AG04450 (cell line): ENCODE measurements at regions of chr6 and their contacts with region 1.

Region 1: GRCh38 chr6:57158658-57159057 is 13.5 kb upstream of the BAG2 start:
- DNase-seq: no peak
- H3K4me3 ChIP-seq: no peak overlapping the region
- H3K27ac ChIP-seq: no peak overlapping the region
- H3K27me3 ChIP-seq: no peaks in the 10 kb centered on the region
- CTCF ChIP-seq: no peak

Region 2: DNA sequence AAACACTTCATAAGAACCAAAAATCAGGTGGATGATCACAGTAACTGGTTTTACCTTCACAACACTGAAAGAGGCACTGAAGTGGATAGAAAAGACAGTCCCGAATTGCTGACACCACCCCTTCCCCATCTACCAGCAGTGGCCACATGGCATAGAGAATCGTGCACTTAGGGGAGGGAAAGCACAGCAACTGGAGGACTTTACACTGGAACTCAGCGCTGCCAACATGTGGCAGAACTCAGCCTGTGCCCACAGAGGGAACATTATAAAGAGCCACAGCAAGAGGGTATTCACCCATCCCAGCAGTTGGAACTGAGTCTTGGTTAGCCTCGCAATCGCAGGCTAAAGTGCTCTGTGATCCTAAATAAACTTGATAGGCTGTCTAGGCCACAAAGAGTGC is 118.6 kb before region 1 on chr6:
- CTCF ChIA-PET with region 1: interaction called, 12 read pairs
- POLR2A ChIA-PET with region 1: no interaction called
- DNase-seq: no peak
- H3K4me3 ChIP-seq: no peak overlapping the region
- H3K27ac ChIP-seq: no peak overlapping the region
- H3K27me3 ChIP-seq: peaks cover 4% of the 10 kb centered on the region
- CTCF ChIP-seq: no peak

Region 3: GRCh38 chr6:57097596-57097995 is 61.1 kb before region 1 on chr6:
- CTCF ChIA-PET with region 1: no interaction called
- POLR2A ChIA-PET with region 1: no interaction called
- DNase-seq: no peak
- H3K4me3 ChIP-seq: no peak overlapping the region
- H3K27ac ChIP-seq: no peak overlapping the region
- H3K27me3 ChIP-seq: no peaks in the 10 kb centered on the region
- CTCF ChIP-seq: no peak

Region 4: GRCh38 chr6:57262901-57263694 is 104.4 kb after region 1 on chr6:
- CTCF ChIA-PET with region 1: no interaction called
- POLR2A ChIA-PET with region 1: no interaction called
- DNase-seq: peak; percentile 84
- H3K4me3 ChIP-seq: no peak overlapping the region
- H3K27ac ChIP-seq: peak overlapping the region; percentile 95
- H3K27me3 ChIP-seq: no peaks in the 10 kb centered on the region
- CTCF ChIP-seq: no peak